MCF 10A (cell line): ENCODE measurements at regions of chr12 and their contacts with region 1.

Region 1: DNA sequence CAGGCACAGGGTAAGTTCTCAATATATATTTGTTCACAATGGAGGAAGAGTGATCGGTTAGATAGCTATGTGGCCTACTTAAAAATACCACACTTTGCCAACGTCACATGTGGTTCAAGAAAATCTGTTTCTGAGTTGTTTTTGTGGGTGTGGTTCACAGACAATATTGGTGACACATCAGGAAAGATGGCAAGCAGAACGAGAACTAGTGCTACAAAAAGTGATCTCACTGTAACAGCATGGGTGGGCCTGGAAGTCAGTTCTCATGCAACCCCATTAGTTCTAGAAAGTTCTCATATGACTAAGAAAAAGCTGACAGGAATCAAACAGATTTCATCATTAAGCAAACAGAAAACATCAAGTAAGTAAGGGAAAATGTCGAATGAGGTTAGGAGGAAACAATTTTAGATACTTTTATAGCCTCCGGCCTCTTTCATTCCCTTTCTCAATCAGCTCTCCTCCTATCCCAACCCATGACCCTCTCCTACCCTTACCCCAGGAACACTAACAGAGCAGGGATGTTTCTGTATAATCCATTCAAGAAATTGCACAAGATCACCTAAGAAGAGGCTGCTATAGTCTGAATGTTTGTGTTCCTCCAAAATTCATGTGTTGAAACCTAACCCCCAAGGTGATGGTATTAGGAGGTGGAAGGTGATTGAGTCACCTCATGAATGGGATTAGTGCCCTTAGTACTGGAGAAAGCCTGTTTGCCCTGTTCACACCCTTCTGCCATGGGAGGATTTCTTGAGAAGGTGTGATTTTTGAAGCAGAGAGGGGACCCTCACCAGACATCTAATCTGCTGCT is 15.5 kb upstream of the NTN4 start:
- DNase-seq: peak; percentile 96
- H3K4me3 Mint-ChIP-seq: peak overlapping the region; percentile 0
- H3K27ac Mint-ChIP-seq: peak overlapping the region; percentile 83
- H3K4me1 Mint-ChIP-seq: peaks cover 38% of the 10 kb centered on the region
- H3K27me3 Mint-ChIP-seq: no peaks in the 10 kb centered on the region
- CTCF ChIP-seq: no peak

Region 2: GRCh38 chr12:95582230-95583058 is 223.6 kb before region 1 on chr12:
- CTCF ChIA-PET with region 1: interaction called, 32 read pairs
- POLR2A ChIA-PET with region 1: no interaction called
- intact Hi-C with region 1: no loop called
- DNase-seq: peak; percentile 51
- H3K4me3 Mint-ChIP-seq: no peak overlapping the region
- H3K27ac Mint-ChIP-seq: no peak overlapping the region
- H3K4me1 Mint-ChIP-seq: no peaks in the 10 kb centered on the region
- H3K27me3 Mint-ChIP-seq: no peaks in the 10 kb centered on the region
- CTCF ChIP-seq: peak; percentile 54

Region 3: GRCh38 chr12:95633049-95633545 is 173.0 kb before region 1 on chr12:
- CTCF ChIA-PET with region 1: no interaction called
- POLR2A ChIA-PET with region 1: interaction called, 9 read pairs
- intact Hi-C with region 1: loop called (anchors 2 kb)
- DNase-seq: peak; percentile 98
- H3K4me3 Mint-ChIP-seq: peak overlapping the region; percentile 41
- H3K27ac Mint-ChIP-seq: peak overlapping the region; percentile 91
- H3K4me1 Mint-ChIP-seq: peaks cover 28% of the 10 kb centered on the region
- H3K27me3 Mint-ChIP-seq: no peaks in the 10 kb centered on the region
- CTCF ChIP-seq: no peak

Region 4: GRCh38 chr12:95724767-95725166 is 81.3 kb before region 1 on chr12:
- CTCF ChIA-PET with region 1: no interaction called
- POLR2A ChIA-PET with region 1: no interaction called
- intact Hi-C with region 1: no loop called
- DNase-seq: no peak
- H3K4me3 Mint-ChIP-seq: no peak overlapping the region
- H3K27ac Mint-ChIP-seq: no peak overlapping the region
- H3K4me1 Mint-ChIP-seq: peaks cover 7% of the 10 kb centered on the region
- H3K27me3 Mint-ChIP-seq: no peaks in the 10 kb centered on the region
- CTCF ChIP-seq: no peak

Region 5: GRCh38 chr12:95763809-95764253 is 42.2 kb before region 1 on chr12:
- CTCF ChIA-PET with region 1: no interaction called
- POLR2A ChIA-PET with region 1: interaction called, 16 read pairs
- intact Hi-C with region 1: loop called (anchors 1 kb)
- DNase-seq: peak; percentile 91
- H3K4me3 Mint-ChIP-seq: no peak overlapping the region
- H3K27ac Mint-ChIP-seq: no peak overlapping the region
- H3K4me1 Mint-ChIP-seq: peaks cover 18% of the 10 kb centered on the region
- H3K27me3 Mint-ChIP-seq: no peaks in the 10 kb centered on the region
- CTCF ChIP-seq: no peak